Mammary epithelial cell (primary cell): ENCODE measurements at regions of chr1 and their contacts with region 1.

Region 1: GRCh38 chr1:230104395-230105244 is 37.6 kb downstream of the GALNT2 start:
- DNase-seq: peak; percentile 99
- H3K4me3 ChIP-seq: peak overlapping the region in 1 of 3 experiments; percentile 12
- H3K27ac ChIP-seq: peak overlapping the region; percentile 75
- H3K4me1 ChIP-seq: peaks cover 36% of the 10 kb centered on the region
- H3K27me3 ChIP-seq: no peaks in the 10 kb centered on the region
- CTCF ChIP-seq: no peak

Region 2: DNA sequence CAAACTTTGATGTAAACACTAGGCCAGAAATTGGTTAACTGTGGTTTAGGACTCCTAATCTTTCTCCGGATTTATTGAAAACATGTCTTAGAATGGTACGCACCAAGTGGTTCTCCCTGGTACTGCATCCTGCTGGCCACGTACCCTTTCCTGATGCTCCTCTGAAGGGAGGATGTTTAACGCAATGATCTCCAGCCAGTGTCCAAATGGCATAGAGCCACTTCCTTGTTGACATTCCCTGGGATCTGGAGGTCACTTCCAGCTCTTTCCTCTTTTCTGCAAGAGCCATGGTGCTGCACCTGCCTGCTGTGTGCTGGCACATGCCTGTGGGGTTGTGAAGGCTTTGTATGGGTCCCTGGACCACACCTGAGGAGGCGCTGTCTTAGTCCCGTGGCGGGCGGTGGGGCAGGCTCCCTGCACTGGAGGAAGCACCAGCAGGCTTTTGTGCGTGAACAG is 16.3 kb after region 1 on chr1:
- CTCF ChIA-PET with region 1: interaction called, 3 read pairs
- dilution Hi-C with region 1: no loop called
- in situ Hi-C with region 1: no loop called
- intact Hi-C with region 1: loop called (anchors 1 kb)
- DNase-seq: no peak
- H3K4me3 ChIP-seq: no peak overlapping the region
- H3K27ac ChIP-seq: no peak overlapping the region
- H3K4me1 ChIP-seq: peaks cover 52% of the 10 kb centered on the region
- H3K27me3 ChIP-seq: no peaks in the 10 kb centered on the region
- CTCF ChIP-seq: peak; percentile 50 to 61